ENCODE measurements at regions of chr16 and their contacts with region 1.

Region 1: GRCh38 chr16:3915426-3916215 is 35.1 kb upstream of the CREBBP start:
- DNase-seq: no peak
- H3K4me3 ChIP-seq: no peak overlapping the region
- H3K27ac ChIP-seq: no peak overlapping the region
- H3K4me1 ChIP-seq: no peaks in the 10 kb centered on the region
- H3K27me3 ChIP-seq: no peaks in the 10 kb centered on the region
- CTCF ChIP-seq: no peak

Region 2: DNA sequence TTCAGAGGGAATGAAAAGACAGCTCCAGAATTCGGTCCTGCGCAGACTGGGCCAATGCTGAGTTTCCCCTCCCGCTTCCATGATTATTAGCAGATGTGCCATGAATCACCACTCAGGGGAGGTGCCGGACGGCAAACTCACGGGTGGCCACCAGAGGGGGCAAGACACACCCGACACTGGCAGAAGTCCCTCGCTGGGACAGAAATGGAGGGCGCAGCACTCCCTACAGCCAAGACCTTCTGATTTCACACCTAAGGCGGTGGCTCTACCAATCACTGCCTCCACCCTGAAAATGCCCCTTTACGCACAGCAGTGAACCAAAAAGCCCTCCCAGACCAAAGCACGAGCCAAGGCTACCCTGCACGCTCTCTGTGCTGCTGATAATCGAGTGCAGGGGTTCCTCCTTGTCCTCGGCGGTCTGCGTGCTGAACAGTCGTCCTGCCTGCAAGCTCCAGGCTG is 225.1 kb before region 1 on chr16:
- CTCF ChIA-PET with region 1: no interaction called
- dilution Hi-C with region 1: no loop called
- in situ Hi-C with region 1: no loop called
- intact Hi-C with region 1: no loop called
- DNase-seq: peak; percentile 77
- H3K4me3 ChIP-seq: peak overlapping the region in 2 of 3 experiments; percentile 11 to 21
- H3K27ac ChIP-seq: no peak overlapping the region
- H3K4me1 ChIP-seq: peaks cover 5% of the 10 kb centered on the region
- H3K27me3 ChIP-seq: no peaks in the 10 kb centered on the region
- CTCF ChIP-seq: peak; percentile 83 to 93

Region 3: GRCh38 chr16:3873482-3874173 is 42.0 kb before region 1 on chr16:
- CTCF ChIA-PET with region 1: no interaction called
- dilution Hi-C with region 1: loop called (anchors 5 kb)
- in situ Hi-C with region 1: no loop called
- intact Hi-C with region 1: no loop called
- DNase-seq: no peak
- H3K4me3 ChIP-seq: no peak overlapping the region
- H3K27ac ChIP-seq: no peak overlapping the region
- H3K4me1 ChIP-seq: peaks cover 9% of the 10 kb centered on the region
- H3K27me3 ChIP-seq: no peaks in the 10 kb centered on the region
- CTCF ChIP-seq: no peak

Region 4: DNA sequence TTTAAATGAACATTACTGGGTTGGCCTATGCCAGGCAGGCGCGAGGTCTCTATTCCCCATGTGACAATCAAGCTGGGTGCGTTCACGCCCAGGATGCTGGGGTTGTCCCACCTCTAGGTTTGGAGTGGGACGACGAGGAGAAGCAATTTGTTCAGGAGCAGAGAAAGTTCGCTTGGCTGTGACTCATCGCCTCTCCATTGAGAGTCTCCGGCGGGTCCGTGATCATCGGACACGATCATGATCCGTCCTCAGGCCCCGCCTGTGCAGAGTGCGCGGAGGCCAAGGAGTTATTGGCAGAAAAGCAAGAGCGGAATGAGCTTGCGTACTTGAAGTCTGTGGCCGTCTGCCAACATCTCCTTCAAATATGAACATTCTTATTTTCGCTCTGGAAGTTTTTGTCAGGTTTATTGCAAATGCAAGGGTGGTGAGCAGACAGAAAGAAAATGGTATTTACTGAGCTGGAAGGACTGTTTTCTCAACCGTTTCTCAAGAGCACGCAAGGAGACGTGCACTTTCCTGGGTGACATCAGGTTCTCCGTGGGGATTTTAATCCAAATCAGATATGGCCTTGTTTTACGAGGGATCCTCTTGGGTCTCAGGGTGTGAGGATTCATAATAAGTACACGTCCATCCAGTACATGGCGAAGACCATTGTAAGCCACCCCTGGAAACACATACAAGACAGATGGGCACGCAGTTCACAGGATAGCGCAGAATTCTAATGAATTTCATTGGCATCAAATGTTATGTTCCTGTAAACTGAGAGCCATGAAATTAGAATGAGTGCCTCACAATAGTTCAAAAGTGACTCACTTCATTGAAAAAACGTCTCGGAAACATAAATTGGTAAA is 34.9 kb after region 1 on chr16:
- CTCF ChIA-PET with region 1: no interaction called
- dilution Hi-C with region 1: loop called (anchors 5 kb)
- in situ Hi-C with region 1: no loop called
- intact Hi-C with region 1: no loop called
- DNase-seq: peak; percentile 52
- H3K4me3 ChIP-seq: no peak overlapping the region
- H3K27ac ChIP-seq: no peak overlapping the region
- H3K4me1 ChIP-seq: peaks cover 16% of the 10 kb centered on the region
- H3K27me3 ChIP-seq: no peaks in the 10 kb centered on the region
- CTCF ChIP-seq: no peak

Region 5: GRCh38 chr16:3961449-3961849 is 45.8 kb after region 1 on chr16:
- CTCF ChIA-PET with region 1: no interaction called
- dilution Hi-C with region 1: no loop called
- in situ Hi-C with region 1: no loop called
- intact Hi-C with region 1: no loop called
- DNase-seq: peak; percentile 58
- H3K4me3 ChIP-seq: no peak overlapping the region
- H3K27ac ChIP-seq: no peak overlapping the region
- H3K4me1 ChIP-seq: no peaks in the 10 kb centered on the region
- H3K27me3 ChIP-seq: peaks cover 7% of the 10 kb centered on the region
- CTCF ChIP-seq: no peak

Measured in mammary epithelial cell (primary cell).